ENCODE measurements at regions of chrX and their contacts with region 1.

Region 1: GRCh38 chrX:85994797-85995196 is 52.6 kb downstream of the CHM start:
- DNase-seq: no peak
- H3K4me3 ChIP-seq: no peak overlapping the region
- CTCF ChIP-seq: no peak
- POLR2A ChIP-seq: no peak

Region 2: DNA sequence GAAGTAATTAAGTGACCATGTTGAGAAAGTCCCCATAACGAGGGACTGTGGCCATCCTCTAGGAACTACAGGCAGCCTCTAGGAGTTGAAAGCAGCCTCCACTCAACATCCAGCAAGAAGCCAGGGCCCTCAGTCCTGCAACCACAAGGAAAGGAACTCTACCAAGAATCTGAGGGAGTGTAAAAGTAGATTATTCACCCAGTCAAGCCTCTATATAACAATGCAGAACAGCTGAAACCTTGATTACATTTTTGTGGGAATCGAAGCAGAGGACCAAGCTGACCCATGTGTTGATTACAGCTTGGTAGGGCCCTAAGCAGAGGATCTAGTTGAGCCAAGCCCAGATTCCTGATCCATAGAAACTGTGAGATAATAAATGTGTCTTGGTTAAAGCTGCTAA is 1823.9 kb before region 1 on chrX:
- intact Hi-C with region 1: loop called (anchors 5 kb)
- DNase-seq: no peak
- H3K4me3 ChIP-seq: no peak overlapping the region
- CTCF ChIP-seq: no peak
- POLR2A ChIP-seq: no peak

Region 3: DNA sequence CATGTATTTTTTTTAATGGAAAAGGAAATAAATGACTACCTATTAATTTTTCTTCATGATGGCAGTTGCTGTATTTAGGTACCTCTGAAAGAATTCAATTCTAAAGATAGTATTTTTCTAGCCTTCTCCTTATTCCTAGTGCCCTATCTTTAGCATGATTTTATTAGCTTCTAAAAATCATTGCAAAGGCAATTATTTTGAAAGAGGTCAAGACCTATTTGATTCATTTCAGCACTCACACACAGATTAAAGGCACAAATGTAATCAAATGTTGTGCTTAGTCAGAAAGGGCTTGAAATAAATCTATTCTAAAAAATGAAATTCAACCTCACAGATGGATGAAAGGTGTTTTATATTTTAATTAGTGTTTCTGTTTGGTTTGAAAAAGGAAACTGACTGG is 540.5 kb before region 1 on chrX:
- intact Hi-C with region 1: no loop called
- DNase-seq: no peak
- H3K4me3 ChIP-seq: no peak overlapping the region
- CTCF ChIP-seq: no peak
- POLR2A ChIP-seq: no peak